Left lung (tissue), 14 donors: ENCODE measurements at regions of chr16 and their contacts with region 1.

Region 1: DNA sequence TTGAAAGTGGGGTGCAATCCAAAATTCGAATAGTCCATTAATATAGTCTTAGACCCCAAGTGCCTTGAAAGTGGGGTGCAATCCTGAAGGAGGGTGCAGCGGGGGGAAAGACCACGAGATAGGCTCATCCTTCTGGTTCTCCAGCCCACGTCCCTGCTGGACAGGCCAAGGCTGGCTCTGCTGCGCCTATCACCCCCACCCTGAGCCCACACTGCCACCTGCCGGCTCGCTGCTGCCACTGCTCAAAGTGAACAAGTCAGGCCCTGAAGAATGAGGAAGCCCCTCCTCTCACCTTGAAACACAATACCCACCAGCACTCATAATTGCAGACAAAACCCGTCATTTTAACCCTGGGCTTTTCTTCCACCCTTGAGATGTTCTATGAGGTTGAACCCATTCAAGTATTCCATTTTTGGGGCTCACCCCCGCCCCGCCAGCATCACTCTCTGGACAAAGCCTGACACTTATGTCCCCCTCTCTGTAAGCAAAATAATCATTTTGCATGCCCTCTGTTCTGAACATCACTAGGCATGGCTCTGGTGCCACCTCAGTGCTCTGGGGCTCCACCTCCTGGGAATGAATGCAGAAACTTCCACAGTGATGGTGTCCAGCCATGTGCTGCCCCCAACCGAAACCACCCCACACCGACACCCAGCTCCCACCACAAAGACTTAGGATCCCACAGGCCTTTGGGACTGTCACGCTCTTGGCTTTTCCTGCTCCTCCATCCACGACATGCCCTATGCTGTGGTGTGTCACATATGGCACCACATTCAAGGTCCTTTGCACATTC is 56.8 kb downstream of the BEAN1 start:
- DNase-seq: peak; percentile 67 to 97 (median 86)
- ATAC-seq: peak; percentile 86
- H3K4me3 ChIP-seq: no peak overlapping the region
- H3K27ac ChIP-seq: no peak overlapping the region
- H3K4me1 ChIP-seq: peaks cover 11 to 33% of the 10 kb centered on the region in 2 donors
- H3K27me3 ChIP-seq: no peaks in the 10 kb centered on the region
- CTCF ChIP-seq: peak; percentile 84 to 93

Region 2: DNA sequence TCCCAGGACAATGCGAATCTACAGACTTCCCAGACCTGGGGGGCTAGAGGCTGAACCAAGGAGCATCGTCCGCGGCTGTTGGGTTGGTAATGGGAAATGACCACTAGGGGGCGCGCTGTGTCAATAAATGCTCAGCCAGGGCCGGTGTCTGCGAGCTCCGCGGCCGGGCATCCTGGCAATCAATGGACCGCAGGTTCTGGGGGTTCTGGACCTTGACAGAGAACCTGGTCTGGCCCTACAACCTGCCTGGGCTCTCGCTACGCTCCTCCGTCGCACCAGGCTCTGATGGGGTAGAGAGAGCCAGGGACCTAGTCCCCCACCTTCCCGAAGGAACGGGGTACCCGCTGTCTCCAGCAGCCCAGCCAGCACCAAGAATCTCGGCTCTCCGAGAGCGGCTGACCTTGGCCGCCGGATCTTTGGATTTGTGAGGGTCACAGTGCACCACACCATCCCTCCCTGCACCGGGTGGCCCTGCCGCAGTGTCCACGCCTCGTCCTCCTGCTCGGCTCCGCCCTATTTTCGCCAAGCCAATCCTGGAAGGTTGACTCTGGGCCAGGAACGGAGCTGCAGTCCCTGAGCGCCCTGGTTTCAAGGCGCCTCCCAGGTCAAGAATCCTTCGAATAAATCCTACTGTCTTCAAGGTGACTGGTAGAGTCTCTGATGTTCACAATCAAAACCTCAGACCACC is 77.2 kb before region 1 on chr16:
- intact Hi-C with region 1: loop called in 1 of 2 experiments (anchors 5 kb)
- DNase-seq: peak; percentile 82 to 94 (median 83)
- ATAC-seq: peak; percentile 94
- H3K4me3 ChIP-seq: peak overlapping the region; percentile 40 to 46
- H3K27ac ChIP-seq: peak overlapping the region in 1 of 2 donors; percentile 71
- H3K4me1 ChIP-seq: peaks cover 13 to 28% of the 10 kb centered on the region in 2 donors
- H3K27me3 ChIP-seq: peaks cover 0 to 21% of the 10 kb centered on the region in 2 donors
- CTCF ChIP-seq: peak; percentile 88 to 95

Region 3: GRCh38 chr16:66416939-66417700 is 66.8 kb before region 1 on chr16:
- intact Hi-C with region 1: no loop called
- DNase-seq: no peak
- ATAC-seq: no peak
- H3K4me3 ChIP-seq: no peak overlapping the region
- H3K27ac ChIP-seq: no peak overlapping the region
- H3K4me1 ChIP-seq: no peaks in the 10 kb centered on the region
- H3K27me3 ChIP-seq: no peaks in the 10 kb centered on the region
- CTCF ChIP-seq: no peak

Region 4: GRCh38 chr16:66562407-66562806 is 78.5 kb after region 1 on chr16:
- intact Hi-C with region 1: no loop called
- DNase-seq: no peak
- ATAC-seq: no peak
- H3K4me3 ChIP-seq: no peak overlapping the region
- H3K27ac ChIP-seq: no peak overlapping the region
- H3K4me1 ChIP-seq: peaks cover 0 to 25% of the 10 kb centered on the region in 2 donors
- H3K27me3 ChIP-seq: no peaks in the 10 kb centered on the region
- CTCF ChIP-seq: no peak